GM12878 (cell line): ENCODE measurements at regions of chr14 and their contacts with region 1.

Region 1: DNA sequence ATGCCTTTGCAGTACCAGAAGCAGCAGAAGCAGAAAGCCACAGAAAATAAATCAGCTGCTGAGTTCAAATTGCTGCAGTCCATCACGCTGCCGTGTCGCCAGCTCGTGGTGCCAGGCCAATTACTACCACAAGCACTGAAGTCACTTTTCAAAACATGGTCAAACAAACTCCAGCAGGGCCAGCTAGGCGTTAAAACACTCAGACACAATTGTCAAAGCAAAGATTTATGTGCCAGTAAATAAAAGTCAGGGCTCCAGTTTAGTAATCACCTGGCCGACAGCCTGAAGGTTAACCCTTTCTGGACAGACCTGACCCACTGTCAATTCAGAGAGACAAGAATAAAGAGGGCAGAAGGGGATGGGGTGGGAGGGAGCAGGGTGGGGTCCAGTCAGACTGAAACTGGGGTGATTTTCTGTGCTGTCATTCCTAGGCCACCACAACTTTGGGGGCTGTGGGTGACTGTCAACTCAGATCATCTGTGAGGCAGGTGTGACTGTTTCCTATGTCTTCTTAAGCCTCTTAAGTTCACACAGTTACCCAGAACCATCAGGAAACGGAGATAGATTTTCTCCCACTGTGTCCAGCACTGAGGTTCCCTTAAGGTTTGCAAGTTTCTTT is 109.8 kb upstream of the FUT8 start:
- DNase-seq: peak; percentile 98
- ATAC-seq: peak; percentile 69
- H3K4me3 ChIP-seq: peak overlapping the region; percentile 66
- H3K27ac ChIP-seq: peak overlapping the region; percentile 96
- H3K4me1 ChIP-seq: peaks cover 49% of the 10 kb centered on the region
- H3K27me3 ChIP-seq: no peaks in the 10 kb centered on the region
- CTCF ChIP-seq: no peak
- EP300 ChIP-seq: peak in 1 of 2 experiments; percentile 65; a peak in 2 of 4 replicates
- POLR2A ChIP-seq: 0 out of 2 replicates have a peak, but pooled peaks have one; percentile 23
- RAD21 ChIP-seq: 0 out of 2 replicates have a peak, but pooled peaks have one; percentile 12

Region 2: GRCh38 chr14:65179918-65180724 is 122.6 kb before region 1 on chr14:
- CTCF ChIA-PET with region 1: no interaction called
- POLR2A ChIA-PET with region 1: no interaction called
- RAD21 ChIA-PET with region 1: no interaction called
- SMC1A ChIA-PET with region 1: no interaction called
- in situ Hi-C with region 1: no loop called
- intact Hi-C with region 1: loop called (anchors 5 kb)
- DNase-seq: peak; percentile 94
- ATAC-seq: peak; percentile 94
- H3K4me3 ChIP-seq: peak overlapping the region; percentile 9; the same call in 1 of the 2 replicates
- H3K27ac ChIP-seq: peak overlapping the region; percentile 99
- H3K4me1 ChIP-seq: peaks cover 32% of the 10 kb centered on the region
- H3K27me3 ChIP-seq: no peaks in the 10 kb centered on the region
- CTCF ChIP-seq: no peak
- EP300 ChIP-seq: peak; percentile 86 to 87
- POLR2A ChIP-seq: no peak
- RAD21 ChIP-seq: peak; percentile 11; the same call in 1 of the 2 replicates

Region 3: GRCh38 chr14:65222440-65222858 is 80.2 kb before region 1 on chr14:
- CTCF ChIA-PET with region 1: interaction called, 5 read pairs
- POLR2A ChIA-PET with region 1: no interaction called
- RAD21 ChIA-PET with region 1: interaction called, 3 read pairs
- SMC1A ChIA-PET with region 1: interaction called, 50 read pairs
- in situ Hi-C with region 1: no loop called
- intact Hi-C with region 1: no loop called
- DNase-seq: no peak
- ATAC-seq: peak; percentile 86
- H3K4me3 ChIP-seq: no peak overlapping the region
- H3K27ac ChIP-seq: peak overlapping the region; percentile 20; the same call in 1 of the 2 replicates
- H3K4me1 ChIP-seq: peaks cover 31% of the 10 kb centered on the region
- H3K27me3 ChIP-seq: no peaks in the 10 kb centered on the region
- CTCF ChIP-seq: peak; percentile 84 to 91 (median 84)
- EP300 ChIP-seq: no peak
- POLR2A ChIP-seq: no peak
- RAD21 ChIP-seq: peak; percentile 95

Region 4: DNA sequence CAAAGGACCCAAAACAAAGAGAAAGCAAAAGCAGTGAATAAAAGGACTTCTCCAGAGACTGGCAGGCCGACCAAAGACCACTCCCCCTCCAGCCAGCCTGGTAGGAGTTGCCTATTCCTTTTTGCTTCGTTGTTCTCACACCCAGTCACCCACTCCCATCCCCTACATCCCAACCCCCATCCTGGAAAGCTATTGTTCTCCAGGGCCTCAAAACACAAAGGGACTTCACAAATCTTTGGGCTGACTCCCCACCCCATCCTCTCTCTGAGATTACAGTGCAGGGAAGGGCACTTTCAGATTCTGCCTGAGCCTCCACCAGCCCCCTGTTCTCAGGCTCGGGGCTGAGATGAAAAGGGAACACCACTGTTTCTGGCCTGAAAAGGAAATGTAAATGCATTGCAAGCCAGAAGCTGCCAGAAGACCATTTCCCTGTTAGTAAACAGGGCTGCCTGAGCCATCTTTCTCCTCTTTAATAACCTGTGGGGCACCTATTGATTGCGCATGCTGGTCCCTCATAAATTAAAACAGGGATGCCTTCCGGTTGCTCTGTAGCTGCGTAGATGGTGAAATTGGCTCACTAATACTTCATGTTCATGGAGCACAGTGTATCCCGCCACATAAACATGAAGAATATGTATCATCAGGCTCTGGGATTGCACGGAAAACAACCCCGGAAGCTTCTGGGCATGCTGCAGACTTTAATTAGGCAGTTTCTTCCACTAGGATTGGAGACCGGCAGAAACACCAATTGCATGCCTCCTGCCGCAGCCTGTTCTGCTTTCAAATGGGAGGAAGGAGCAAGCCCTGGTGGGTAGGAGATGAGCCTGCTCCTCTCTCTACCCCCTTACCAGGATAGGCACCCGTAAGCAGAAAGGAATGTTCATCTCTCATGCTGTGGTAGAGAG is 20.4 kb before region 1 on chr14:
- CTCF ChIA-PET with region 1: interaction called, 63 read pairs
- POLR2A ChIA-PET with region 1: interaction called, 51 read pairs
- RAD21 ChIA-PET with region 1: interaction called, 146 read pairs
- SMC1A ChIA-PET with region 1: interaction called, 203 read pairs
- in situ Hi-C with region 1: no loop called
- intact Hi-C with region 1: loop called (anchors 1 kb)
- DNase-seq: no peak
- ATAC-seq: peak; percentile 55
- H3K4me3 ChIP-seq: peak overlapping the region; percentile 66
- H3K27ac ChIP-seq: peak overlapping the region; percentile 89
- H3K4me1 ChIP-seq: peaks cover 43% of the 10 kb centered on the region
- H3K27me3 ChIP-seq: no peaks in the 10 kb centered on the region
- CTCF ChIP-seq: no peak
- EP300 ChIP-seq: no peak
- POLR2A ChIP-seq: 0 out of 2 replicates have a peak, but pooled peaks have one; percentile 8
- RAD21 ChIP-seq: no peak

Region 5: GRCh38 chr14:65312859-65313258 is 10.2 kb after region 1 on chr14:
- CTCF ChIA-PET with region 1: interaction called, 61 read pairs
- POLR2A ChIA-PET with region 1: interaction called, 223 read pairs
- RAD21 ChIA-PET with region 1: interaction called, 272 read pairs
- SMC1A ChIA-PET with region 1: interaction called, 391 read pairs
- in situ Hi-C with region 1: no loop called
- intact Hi-C with region 1: no loop called
- DNase-seq: no peak
- ATAC-seq: no peak
- H3K4me3 ChIP-seq: no peak overlapping the region
- H3K27ac ChIP-seq: peak overlapping the region; percentile 35
- H3K4me1 ChIP-seq: peaks cover 30% of the 10 kb centered on the region
- H3K27me3 ChIP-seq: no peaks in the 10 kb centered on the region
- CTCF ChIP-seq: no peak
- EP300 ChIP-seq: no peak
- POLR2A ChIP-seq: no peak
- RAD21 ChIP-seq: no peak

Region 6: DNA sequence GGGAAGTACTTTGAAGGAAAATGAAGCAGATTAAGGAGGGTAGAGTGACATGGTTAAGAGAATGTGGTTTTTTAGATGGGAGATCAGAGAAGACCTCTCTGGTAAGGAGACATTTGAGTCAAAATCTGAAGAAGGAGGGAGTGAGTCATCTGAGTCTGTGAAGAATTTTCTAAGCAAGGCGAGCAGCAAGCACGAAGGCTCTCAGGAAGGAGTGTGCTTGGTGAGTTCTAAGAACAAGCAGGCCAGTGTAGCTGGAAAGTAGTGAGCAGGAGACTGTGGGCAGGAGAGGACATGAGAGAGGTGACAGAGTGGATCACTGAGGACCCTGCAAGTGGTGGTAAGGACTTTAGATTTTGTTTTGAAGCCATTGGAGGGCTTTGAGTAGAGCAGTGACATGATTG is 33.5 kb after region 1 on chr14:
- CTCF ChIA-PET with region 1: interaction called, 3 read pairs
- POLR2A ChIA-PET with region 1: interaction called, 6 read pairs
- RAD21 ChIA-PET with region 1: interaction called, 6 read pairs
- SMC1A ChIA-PET with region 1: interaction called, 17 read pairs
- in situ Hi-C with region 1: no loop called
- intact Hi-C with region 1: no loop called
- DNase-seq: no peak
- ATAC-seq: peak; percentile 83
- H3K4me3 ChIP-seq: no peak overlapping the region; the same call in 1 of the 2 replicates
- H3K27ac ChIP-seq: peak overlapping the region; percentile 41
- H3K4me1 ChIP-seq: peaks cover 36% of the 10 kb centered on the region
- H3K27me3 ChIP-seq: no peaks in the 10 kb centered on the region
- CTCF ChIP-seq: no peak
- EP300 ChIP-seq: no peak
- POLR2A ChIP-seq: peak; percentile 35; the same call in 1 of the 2 replicates
- RAD21 ChIP-seq: peak; percentile 19; the same call in 1 of the 2 replicates